ENCODE measurements at regions of chr17 and their contacts with region 1.

Region 1: DNA sequence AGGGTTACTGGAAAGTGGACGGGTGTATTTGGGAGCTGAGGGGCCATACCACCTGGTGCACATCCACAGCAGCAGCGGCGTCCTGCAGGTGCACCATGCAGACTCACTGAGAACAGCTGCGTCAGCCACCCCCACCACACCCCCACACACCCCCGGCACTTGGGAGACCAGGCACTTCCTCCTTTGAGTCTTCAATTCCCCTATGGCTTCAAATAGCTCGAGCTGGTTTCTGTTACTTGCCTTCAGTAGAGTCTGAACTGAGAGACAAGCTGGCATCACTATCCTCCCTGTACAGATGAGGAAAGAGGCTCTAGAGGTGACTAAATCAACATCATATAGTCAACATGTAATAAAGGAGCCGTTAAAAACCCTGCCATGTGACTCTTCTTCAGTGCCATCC is 15.4 kb downstream of the CUEDC1 start:
- DNase-seq: no peak
- H3K4me3 ChIP-seq: no peak overlapping the region
- H3K27ac ChIP-seq: no peak overlapping the region
- H3K4me1 ChIP-seq: peaks cover 12% of the 10 kb centered on the region
- H3K27me3 ChIP-seq: no peaks in the 10 kb centered on the region
- CTCF ChIP-seq: no peak
- EP300 ChIP-seq: no peak
- POLR2A ChIP-seq: no peak

Region 2: GRCh38 chr17:57861000-57861789 is 78.6 kb before region 1 on chr17:
- intact Hi-C with region 1: no loop called
- DNase-seq: peak in 1 of 5 donors; percentile 41
- H3K4me3 ChIP-seq: peak overlapping the region; percentile 52
- H3K27ac ChIP-seq: peak overlapping the region in 1 of 2 donors; percentile 8
- H3K4me1 ChIP-seq: peaks cover 12% of the 10 kb centered on the region
- H3K27me3 ChIP-seq: no peaks in the 10 kb centered on the region
- CTCF ChIP-seq: no peak
- EP300 ChIP-seq: no peak
- POLR2A ChIP-seq: no peak

Region 3: GRCh38 chr17:57898487-57899311 is 41.1 kb before region 1 on chr17:
- intact Hi-C with region 1: loop called in 1 of 4 experiments (anchors 5 kb)
- DNase-seq: peak in 4 of 5 donors; percentile 48 to 71 (median 58)
- H3K4me3 ChIP-seq: no peak overlapping the region
- H3K27ac ChIP-seq: peak overlapping the region; percentile 35 to 60
- H3K4me1 ChIP-seq: peaks cover 31% of the 10 kb centered on the region
- H3K27me3 ChIP-seq: no peaks in the 10 kb centered on the region
- CTCF ChIP-seq: no peak
- EP300 ChIP-seq: no peak
- POLR2A ChIP-seq: no peak

Region 4: DNA sequence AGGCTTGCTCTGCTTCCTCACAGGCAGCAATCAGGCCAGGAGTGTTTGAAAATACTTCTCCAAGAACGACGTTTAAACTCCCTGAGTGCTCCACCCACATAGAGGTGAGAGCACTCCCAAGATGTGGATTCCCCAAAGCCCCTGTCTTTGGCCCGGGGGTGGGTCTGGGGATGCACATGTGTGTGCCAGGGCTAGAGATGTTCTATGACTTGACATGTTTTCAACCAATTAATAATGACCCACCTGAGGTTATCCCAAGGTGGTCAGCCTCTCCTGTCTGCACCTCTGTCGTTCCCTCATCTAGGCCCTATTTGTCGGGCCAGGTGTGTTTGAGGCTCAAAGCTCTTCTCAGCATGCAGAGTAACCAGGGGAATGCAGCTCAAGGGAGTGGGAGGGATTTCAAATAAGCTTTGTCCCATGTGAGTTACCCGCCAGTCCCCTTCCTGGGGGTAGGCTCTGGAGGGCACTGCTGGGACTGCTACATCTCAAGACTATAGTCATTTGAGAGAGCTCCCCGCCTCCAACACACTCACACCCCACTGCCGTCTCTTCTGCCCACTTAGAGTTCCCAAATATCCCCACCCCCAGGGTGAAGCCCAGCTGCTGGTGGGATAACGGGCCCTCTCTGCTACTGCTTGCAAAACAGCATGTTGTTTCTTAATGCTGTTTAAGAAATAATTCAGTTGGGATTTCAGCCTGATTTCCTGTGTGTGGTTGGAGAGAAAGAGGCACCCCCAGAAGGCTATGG is 344.7 kb after region 1 on chr17:
- intact Hi-C with region 1: no loop called
- DNase-seq: no peak
- H3K4me3 ChIP-seq: no peak overlapping the region
- H3K27ac ChIP-seq: no peak overlapping the region
- H3K4me1 ChIP-seq: no peaks in the 10 kb centered on the region
- H3K27me3 ChIP-seq: no peaks in the 10 kb centered on the region
- CTCF ChIP-seq: no peak
- EP300 ChIP-seq: no peak
- POLR2A ChIP-seq: no peak

Measured in ovary (tissue), 10 donors.